Head of caudate nucleus (tissue), 42 donors: ENCODE measurements at regions of chr19 and their contacts with region 1.

Region 1: DNA sequence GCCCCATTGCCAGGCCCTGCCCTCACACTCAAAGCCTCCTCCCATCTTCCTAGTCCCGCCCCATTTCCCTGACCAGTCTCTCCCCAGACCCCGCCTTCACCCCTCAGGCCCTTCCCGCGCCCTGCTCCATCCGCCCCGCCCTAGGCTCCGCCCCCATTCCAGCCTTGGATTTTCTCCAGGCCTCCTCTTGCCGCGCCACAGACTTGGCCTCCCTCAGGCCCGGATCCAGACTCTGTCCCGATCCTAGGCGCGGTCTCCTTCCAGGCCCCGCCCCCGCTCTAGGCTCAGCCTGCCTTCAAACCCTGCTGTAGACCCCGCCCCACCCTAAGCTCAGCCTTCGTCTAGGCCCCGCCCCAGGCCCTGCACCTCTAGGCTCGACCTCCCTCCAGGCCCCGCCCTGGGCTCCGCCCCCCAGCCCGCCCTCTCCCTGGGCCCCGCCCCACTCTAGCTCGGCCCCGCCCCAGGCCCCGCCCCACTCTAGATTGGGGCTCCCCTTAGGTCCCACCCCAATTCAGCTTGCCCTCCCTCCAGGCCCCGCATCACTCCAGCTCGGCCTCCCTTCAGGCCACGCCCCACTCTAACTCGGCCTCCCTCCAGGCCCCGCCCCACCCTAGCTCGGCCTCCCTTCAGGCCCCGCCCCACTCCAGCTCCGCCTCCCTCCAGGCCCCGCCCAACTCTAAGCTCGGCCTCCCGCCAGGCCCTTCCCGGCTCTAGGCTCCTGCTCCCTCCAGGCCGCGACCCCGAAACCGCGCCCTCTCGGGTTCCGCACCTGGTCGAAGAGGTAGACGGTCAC is 18.5 kb downstream of the LMTK3 start:
- DNase-seq: peak; percentile 69 to 96 (median 87)

Region 2: GRCh38 chr19:48582168-48582567 is 89.0 kb after region 1 on chr19:
- intact Hi-C with region 1: loop called (anchors 5 kb)
- DNase-seq: no peak